ENCODE measurements at regions of chr4 and their contacts with region 1.

Region 1: DNA sequence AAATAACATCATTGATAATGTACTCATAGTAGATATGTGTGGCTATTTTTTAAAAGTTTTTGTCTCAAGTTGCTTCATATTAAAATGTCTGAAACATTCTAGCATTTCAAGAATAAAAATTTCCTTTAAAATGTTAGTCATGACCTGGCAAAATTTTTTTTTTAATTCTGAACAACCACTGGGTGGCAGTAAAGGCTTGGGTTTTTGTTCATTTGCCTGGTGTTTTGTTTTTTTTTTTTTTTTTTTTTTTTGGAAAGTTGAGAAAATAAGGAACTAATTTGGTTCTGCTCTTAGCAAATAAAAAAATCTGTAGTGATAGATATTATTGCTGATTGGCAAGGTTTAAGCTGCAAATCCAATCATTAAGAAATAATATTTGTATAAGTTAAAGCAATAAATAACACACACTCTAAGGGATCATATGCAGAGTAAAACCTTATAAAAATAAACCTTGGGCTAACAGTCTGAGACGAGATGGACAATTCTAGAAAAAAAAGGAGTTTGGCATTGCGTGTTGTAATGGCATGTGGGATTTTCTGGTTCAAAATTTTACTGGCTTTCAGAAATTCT is 81.4 kb downstream of the CEP44 start:
- DNase-seq: no peak
- ATAC-seq: no peak

Region 2: DNA sequence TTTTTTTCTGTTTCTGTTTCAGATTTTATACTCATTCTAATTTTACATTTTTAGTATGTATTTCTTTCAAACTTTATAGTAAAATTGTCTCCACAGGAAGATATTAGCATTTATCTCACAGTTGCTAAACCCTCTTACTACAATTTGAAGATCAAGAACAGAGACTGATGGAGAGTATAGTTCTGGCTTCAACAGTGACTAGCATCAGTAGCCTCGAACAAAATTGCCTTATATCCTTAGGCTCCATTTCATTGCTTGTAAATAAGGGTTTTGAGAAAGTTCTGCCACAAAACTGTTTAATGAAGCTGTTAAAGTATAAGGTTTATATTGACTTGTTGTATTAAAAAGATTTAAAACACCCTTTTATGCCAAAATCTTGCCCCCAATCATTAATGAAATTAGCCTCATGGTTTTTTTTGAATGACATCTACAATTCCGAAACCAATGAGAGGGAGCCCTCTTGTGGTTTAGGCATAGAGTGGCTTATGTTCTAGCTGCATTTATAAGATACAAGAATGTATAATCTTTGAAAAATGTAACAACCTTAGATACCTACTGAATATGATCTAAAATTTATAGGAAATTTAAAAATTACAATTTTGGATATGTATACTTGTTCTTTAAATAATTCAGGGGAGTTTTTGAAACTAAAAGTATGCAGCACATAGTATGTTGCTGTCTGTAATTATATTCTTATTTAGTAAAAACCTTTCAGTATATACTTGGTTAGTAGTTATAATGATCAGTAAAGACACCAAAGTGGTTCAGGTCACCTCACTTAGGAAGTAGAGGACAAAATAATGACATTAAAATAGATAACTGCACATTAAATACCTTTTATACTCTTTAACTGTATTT is 267.0 kb after region 1 on chr4:
- intact Hi-C with region 1: loop called (anchors 2 kb)
- DNase-seq: no peak
- ATAC-seq: no peak